AG04449 (cell line): ENCODE measurements at regions of chr2 and their contacts with region 1.

Region 1: DNA sequence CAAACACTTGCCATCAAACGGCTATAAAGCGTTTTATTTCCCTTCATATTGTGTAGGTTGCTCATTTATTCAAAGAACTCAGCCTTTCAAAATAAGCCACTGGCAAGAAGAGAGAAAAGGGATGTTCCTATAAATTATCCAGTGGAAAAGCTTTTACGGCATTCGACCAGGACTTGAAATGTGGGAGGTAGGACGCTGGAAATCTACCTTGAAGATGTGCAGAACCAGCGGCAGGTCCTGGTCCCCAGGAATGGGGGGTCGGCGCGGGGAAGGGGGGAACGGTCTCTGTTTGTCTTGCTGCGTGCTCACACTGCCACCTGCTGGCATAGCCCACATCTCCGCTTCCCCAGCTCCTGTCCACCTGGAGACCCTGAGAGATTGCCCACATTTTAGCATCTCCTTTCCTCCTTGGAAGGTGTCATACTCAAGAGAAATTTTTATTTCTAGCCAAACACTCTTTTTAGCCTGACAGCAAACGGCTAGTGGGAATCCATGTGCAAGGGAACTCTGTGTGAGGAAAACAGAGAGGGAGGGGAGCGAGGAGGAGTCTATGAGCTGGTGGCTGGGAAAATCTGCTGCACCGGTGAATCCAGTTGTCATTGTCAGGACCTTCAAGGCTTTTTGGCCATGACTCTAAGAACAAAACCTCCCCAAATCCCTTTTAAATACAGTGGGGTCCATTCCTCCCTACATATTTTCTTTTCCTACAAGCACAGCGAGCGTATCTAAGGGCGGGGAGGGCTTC is 349.0 kb upstream of the PKDCC start:
- DNase-seq: no peak
- H3K4me3 ChIP-seq: no peak overlapping the region
- CTCF ChIP-seq: peak; percentile 80

Region 2: DNA sequence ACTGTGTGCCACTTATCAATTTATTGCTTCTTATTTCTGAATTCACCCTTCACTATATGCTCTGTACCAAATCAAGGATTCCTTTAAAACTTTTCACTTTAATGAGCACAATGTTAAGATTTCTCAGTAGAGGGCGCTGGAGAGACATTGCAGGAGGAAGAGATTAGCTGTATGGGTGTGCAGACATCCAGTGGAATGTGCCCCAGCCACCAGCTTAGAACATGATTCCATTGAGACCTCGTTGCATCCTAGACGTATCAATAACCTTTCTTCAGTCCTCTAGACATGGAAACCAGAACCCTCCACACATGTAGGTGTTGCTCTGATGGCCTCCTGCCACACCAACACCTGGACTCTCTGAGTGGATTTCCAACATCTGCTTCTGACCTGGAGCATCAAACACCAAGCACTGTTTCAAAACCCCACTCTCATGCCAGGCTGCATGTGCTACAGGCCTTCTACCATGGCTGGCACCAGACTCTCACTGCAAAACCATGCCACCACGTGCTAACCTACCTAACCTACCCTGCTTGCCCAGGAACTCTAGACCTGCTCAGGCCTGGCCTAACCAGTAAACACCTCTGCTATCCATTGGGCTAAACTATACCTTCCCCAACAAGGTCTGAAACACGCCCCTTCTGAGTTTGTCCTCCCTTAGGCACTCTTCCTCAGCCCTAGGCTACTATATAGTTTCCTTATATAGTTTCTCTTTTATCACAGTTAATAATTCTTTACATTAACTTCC is 284.2 kb before region 1 on chr2:
- CTCF ChIA-PET with region 1: interaction called, 47 read pairs
- POLR2A ChIA-PET with region 1: no interaction called
- DNase-seq: no peak
- H3K4me3 ChIP-seq: no peak overlapping the region
- CTCF ChIP-seq: peak; percentile 48

Region 3: DNA sequence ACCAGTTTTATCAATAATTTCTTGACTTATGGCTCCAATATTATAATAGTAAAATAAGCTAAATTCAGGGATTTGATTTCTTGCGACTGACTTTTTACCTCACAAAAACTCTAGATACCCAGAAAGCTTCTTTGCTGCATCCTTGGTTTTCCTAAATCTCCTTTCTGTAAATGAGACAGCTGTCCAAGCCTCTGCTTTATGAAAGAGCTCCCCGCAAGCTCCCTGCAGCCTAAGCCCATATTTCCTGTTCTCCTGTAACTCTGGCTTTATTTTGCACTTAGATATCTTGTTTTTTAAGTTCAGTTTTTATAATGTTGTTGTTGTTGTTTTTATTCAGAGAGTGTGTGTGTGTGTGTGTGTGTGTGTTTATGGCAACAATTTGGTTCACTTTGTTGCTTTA is 12.7 kb before region 1 on chr2:
- CTCF ChIA-PET with region 1: interaction called, 13 read pairs
- POLR2A ChIA-PET with region 1: no interaction called
- DNase-seq: no peak
- H3K4me3 ChIP-seq: no peak overlapping the region
- CTCF ChIP-seq: no peak

Region 4: GRCh38 chr2:41716497-41716896 is 17.6 kb after region 1 on chr2:
- CTCF ChIA-PET with region 1: interaction called, 16 read pairs
- POLR2A ChIA-PET with region 1: no interaction called
- DNase-seq: no peak
- H3K4me3 ChIP-seq: no peak overlapping the region
- CTCF ChIP-seq: no peak